ENCODE measurements at regions of chr3 and their contacts with region 1.

Region 1: DNA sequence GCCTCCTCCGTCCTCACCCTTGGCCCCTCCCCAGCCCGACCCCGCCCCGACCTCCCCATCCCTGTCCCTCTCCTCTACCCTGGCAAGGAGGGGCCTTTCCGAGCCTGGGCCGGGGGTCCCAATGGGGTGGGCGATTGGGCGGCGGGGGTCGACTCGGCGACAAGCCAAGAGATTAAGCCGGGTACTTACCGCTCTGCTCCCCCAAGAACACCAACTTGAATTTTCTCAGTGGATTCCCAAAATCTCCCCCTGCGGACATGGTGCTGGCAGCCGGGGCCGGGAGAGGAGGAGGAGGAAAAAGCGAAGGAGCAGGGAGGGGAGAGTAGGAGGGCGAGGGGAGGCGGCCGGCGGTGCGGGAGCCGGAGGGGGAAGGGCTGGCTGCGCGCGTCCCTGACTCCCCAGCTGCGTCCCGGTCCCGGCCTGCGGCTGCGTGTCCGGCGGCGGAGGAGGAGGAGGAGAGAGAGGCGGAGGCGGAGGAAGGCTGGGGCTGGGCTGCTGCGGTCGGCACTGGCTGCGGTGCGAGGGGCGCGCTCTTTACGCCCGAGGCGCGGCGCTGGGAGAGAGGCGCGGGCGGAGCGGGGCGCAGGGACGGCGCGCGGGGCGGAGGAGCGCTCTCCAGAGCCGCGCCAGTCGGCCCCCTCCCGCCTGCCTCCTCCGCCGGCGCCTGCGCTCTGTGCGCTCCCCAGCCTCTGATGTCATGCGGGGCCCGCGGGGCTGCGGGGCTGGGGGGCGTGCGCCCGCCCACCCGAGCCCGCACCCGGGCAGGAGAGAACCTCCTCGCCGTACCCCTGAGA is at the start of gene RAB6B:
- DNase-seq: peak; percentile 75
- ATAC-seq: peak; percentile 85
- total RNA-seq, gene RAB6B: 51.6 TPM

Region 2: GRCh38 chr3:133821767-133822638 is 73.4 kb before region 1 on chr3:
- intact Hi-C with region 1: loop called (anchors 10 kb)
- DNase-seq: peak; percentile 74
- ATAC-seq: peak; percentile 82